Heart left ventricle (tissue), 16 donors: ENCODE measurements at regions of chr18 and their contacts with region 1.

Region 1: GRCh38 chr18:3710712-3711269 is 260.8 kb downstream of the TGIF1 start:
- DNase-seq: peak in 2 of 5 donors; percentile 32 to 62
- ATAC-seq: peak; percentile 55 to 88 (median 76)
- H3K4me3 ChIP-seq: no peak overlapping the region
- H3K27ac ChIP-seq: no peak overlapping the region
- H3K4me1 ChIP-seq: peaks cover 0 to 23% (median 0%) of the 10 kb centered on the region in 12 donors
- H3K27me3 ChIP-seq: no peaks in the 10 kb centered on the region
- CTCF ChIP-seq: no peak
- POLR2A ChIP-seq: no peak

Region 2: GRCh38 chr18:3593904-3594661 is 116.7 kb before region 1 on chr18:
- intact Hi-C with region 1: no loop called
- DNase-seq: peak; percentile 86 to 95 (median 91)
- ATAC-seq: peak; percentile 81 to 88 (median 86)
- H3K4me3 ChIP-seq: peak overlapping the region; percentile 29 to 68 (median 54)
- H3K27ac ChIP-seq: peak overlapping the region; percentile 90 to 97 (median 96)
- H3K4me1 ChIP-seq: peaks cover 5 to 55% (median 41%) of the 10 kb centered on the region in 12 donors
- H3K27me3 ChIP-seq: no peaks in the 10 kb centered on the region
- CTCF ChIP-seq: peak; percentile 77 to 97 (median 85)
- POLR2A ChIP-seq: peak in 1 of 2 donors; percentile 33

Region 3: GRCh38 chr18:3760741-3761140 is 50.0 kb after region 1 on chr18:
- intact Hi-C with region 1: loop called in 1 of 10 experiments (anchors 10 kb)
- DNase-seq: no peak
- ATAC-seq: no peak
- H3K4me3 ChIP-seq: no peak overlapping the region
- H3K27ac ChIP-seq: no peak overlapping the region
- H3K4me1 ChIP-seq: peaks cover 0 to 7% (median 0%) of the 10 kb centered on the region in 12 donors
- H3K27me3 ChIP-seq: peaks cover 0 to 2% (median 0%) of the 10 kb centered on the region in 9 donors
- CTCF ChIP-seq: no peak
- POLR2A ChIP-seq: no peak

Region 4: GRCh38 chr18:3799176-3799914 is 88.6 kb after region 1 on chr18:
- intact Hi-C with region 1: no loop called
- DNase-seq: no peak
- ATAC-seq: no peak
- H3K4me3 ChIP-seq: no peak overlapping the region
- H3K27ac ChIP-seq: no peak overlapping the region
- H3K4me1 ChIP-seq: peaks cover 0 to 3% (median 0%) of the 10 kb centered on the region in 12 donors
- H3K27me3 ChIP-seq: no peaks in the 10 kb centered on the region
- CTCF ChIP-seq: no peak
- POLR2A ChIP-seq: no peak